Activated CD4-positive, alpha-beta memory T cell treated with anti-CD3 and anti-CD28 coated beads for 36 hours (primary cell): ENCODE measurements at regions of chr19 and their contacts with region 1.

Region 1: GRCh38 chr19:55809381-55810058 is 22.3 kb downstream of the NLRP11 start:
- DNase-seq: peak; percentile 59
- H3K4me3 Mint-ChIP-seq: no peak overlapping the region
- H3K27ac Mint-ChIP-seq: no peak overlapping the region
- H3K4me1 Mint-ChIP-seq: peaks cover 6% of the 10 kb centered on the region
- H3K27me3 Mint-ChIP-seq: peaks cover under 1% of the 10 kb centered on the region

Region 2: DNA sequence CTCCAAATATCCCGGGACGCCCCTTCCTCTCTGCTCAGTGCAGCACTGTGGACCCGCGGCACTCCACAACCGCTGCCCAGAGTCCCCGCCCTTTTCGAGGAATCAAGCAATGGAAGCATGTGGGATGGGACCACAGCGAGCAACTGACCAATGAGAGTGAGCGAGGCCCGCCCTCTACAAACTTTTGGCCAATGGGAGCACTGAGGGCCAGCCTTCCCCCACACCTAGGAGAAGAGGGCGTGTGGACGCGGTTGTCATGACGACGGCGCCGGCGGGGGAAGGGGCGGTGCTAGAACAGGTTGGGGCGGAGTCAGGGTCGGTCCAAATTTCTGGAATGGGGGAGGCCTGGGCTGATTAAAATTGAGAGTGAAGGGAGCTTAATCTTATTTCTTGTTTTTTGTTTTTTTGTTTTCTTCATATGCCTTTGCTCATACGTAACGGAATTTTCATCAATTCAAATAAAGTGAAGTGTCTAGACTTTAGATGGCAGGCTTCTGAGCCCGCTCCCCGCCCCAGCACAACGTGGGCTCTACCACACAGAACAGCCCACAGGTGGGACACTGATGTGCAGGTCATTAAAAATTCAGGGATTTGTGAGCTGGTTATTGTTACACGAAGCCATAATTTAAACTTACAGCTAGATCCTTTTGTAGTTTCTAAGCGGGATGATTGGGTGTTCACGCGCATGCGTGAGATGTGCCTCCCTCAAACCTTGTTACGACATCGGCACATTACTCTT is 642.8 kb before region 1 on chr19 and contains the start of gene DNAAF3:
- CTCF ChIA-PET with region 1: no interaction called
- POLR2A ChIA-PET with region 1: no interaction called
- intact Hi-C with region 1: no loop called
- DNase-seq: peak; percentile 85
- H3K4me3 Mint-ChIP-seq: peak within 1 kb of the TSS; percentile 61
- H3K27ac Mint-ChIP-seq: no peak within 1 kb of the TSS
- H3K4me1 Mint-ChIP-seq: peaks cover 12% of the 10 kb centered on the region
- H3K27me3 Mint-ChIP-seq: peaks cover 52% of the 10 kb centered on the region
- total RNA-seq, gene DNAAF3: not detected

Region 3: DNA sequence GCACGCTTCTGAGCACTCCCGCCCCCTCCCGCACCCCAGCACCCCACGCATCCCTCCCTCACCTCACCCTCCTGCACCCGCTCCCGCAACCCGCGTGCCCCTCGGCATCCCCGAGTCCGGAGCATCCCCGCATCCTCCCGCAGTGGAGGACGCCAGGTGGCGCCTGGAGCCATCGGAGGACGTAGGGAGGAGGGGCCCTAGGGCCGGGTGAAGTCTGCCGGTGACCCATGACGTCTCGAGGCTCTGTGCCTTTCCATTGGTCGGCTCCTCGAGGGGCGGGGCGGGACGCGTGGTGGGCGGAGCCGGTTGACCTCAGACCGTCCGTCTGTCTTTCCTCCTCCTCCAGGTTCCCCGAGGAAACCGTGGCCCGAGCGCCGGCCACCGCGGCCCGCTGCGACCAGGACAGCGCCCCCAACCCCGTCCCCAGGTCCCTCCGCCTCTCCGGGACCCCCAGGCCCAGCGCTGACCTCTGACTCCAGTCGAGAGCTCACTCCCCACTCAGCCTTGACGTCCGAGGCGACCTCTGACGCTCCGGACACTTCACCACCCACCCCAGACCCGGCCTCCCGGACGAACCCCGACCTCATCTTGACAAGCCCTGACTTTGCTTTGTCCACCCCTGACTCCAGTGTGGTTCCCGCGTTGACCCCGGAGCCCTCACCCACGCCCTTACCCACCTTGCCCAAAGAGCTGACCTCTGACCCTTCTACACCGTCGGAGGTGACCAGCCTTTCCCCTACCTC is 292.5 kb before region 1 on chr19:
- CTCF ChIA-PET with region 1: no interaction called
- POLR2A ChIA-PET with region 1: no interaction called
- intact Hi-C with region 1: loop called (anchors 10 kb)
- DNase-seq: peak; percentile 93
- H3K4me3 Mint-ChIP-seq: peak overlapping the region; percentile 64
- H3K27ac Mint-ChIP-seq: no peak overlapping the region
- H3K4me1 Mint-ChIP-seq: peaks cover 3% of the 10 kb centered on the region
- H3K27me3 Mint-ChIP-seq: peaks cover 11% of the 10 kb centered on the region

Region 4: GRCh38 chr19:55703790-55704215 is 105.7 kb before region 1 on chr19:
- CTCF ChIA-PET with region 1: interaction called, 11 read pairs
- POLR2A ChIA-PET with region 1: no interaction called
- intact Hi-C with region 1: no loop called
- DNase-seq: peak; percentile 63
- H3K4me3 Mint-ChIP-seq: no peak overlapping the region
- H3K27ac Mint-ChIP-seq: no peak overlapping the region
- H3K4me1 Mint-ChIP-seq: no peaks in the 10 kb centered on the region
- H3K27me3 Mint-ChIP-seq: no peaks in the 10 kb centered on the region